Endothelial cell of umbilical vein (primary cell): ENCODE measurements at regions of chr11 and their contacts with region 1.

Region 1: GRCh38 chr11:79100093-79100910 is 340.5 kb downstream of the TENM4 start:
- DNase-seq: peak; percentile 68
- H3K4me3 ChIP-seq: no peak overlapping the region
- H3K27ac ChIP-seq: no peak overlapping the region
- H3K4me1 ChIP-seq: peaks cover 8% of the 10 kb centered on the region
- H3K27me3 ChIP-seq: no peaks in the 10 kb centered on the region
- CTCF ChIP-seq: peak; percentile 78
- POLR2A ChIP-seq: no peak

Region 2: DNA sequence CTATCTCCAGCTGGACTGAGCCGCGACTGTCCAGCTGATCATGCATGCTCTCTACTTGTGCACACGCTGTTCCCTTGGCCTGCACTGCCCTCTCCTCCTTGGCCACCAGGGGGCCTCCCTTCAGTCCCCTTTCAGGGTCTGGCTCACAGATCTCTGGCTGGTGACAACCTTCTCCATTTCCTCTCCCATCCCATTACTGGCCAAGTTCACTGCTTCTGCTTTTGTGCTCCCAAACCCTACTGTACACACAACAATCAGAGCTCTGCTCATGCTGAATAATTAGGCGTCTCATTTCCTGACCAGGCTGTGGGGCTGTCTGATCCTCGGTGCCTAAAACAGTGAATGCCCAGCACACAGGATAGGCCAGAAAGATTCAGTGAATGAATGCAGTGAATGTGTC is 301.6 kb before region 1 on chr11:
- CTCF ChIA-PET with region 1: interaction called, 78 read pairs
- POLR2A ChIA-PET with region 1: no interaction called
- dilution Hi-C with region 1: no loop called
- intact Hi-C with region 1: loop called (anchors 1 kb)
- DNase-seq: peak; percentile 59
- H3K4me3 ChIP-seq: no peak overlapping the region
- H3K27ac ChIP-seq: no peak overlapping the region
- H3K4me1 ChIP-seq: peaks cover 41% of the 10 kb centered on the region
- H3K27me3 ChIP-seq: no peaks in the 10 kb centered on the region
- CTCF ChIP-seq: peak; percentile 85 to 94
- POLR2A ChIP-seq: no peak

Region 3: GRCh38 chr11:79052544-79052943 is 47.8 kb before region 1 on chr11:
- CTCF ChIA-PET with region 1: interaction called, 21 read pairs
- POLR2A ChIA-PET with region 1: no interaction called
- dilution Hi-C with region 1: no loop called
- intact Hi-C with region 1: no loop called
- DNase-seq: peak; percentile 28
- H3K4me3 ChIP-seq: no peak overlapping the region
- H3K27ac ChIP-seq: no peak overlapping the region
- H3K4me1 ChIP-seq: no peaks in the 10 kb centered on the region
- H3K27me3 ChIP-seq: peaks cover 9 to 14% of the 10 kb centered on the region in 2 experiments
- CTCF ChIP-seq: peak in 1 of 2 donors; percentile 66
- POLR2A ChIP-seq: no peak

Region 4: GRCh38 chr11:79071190-79071589 is 29.1 kb before region 1 on chr11:
- CTCF ChIA-PET with region 1: interaction called, 25 read pairs
- POLR2A ChIA-PET with region 1: no interaction called
- dilution Hi-C with region 1: no loop called
- intact Hi-C with region 1: no loop called
- DNase-seq: no peak
- H3K4me3 ChIP-seq: no peak overlapping the region
- H3K27ac ChIP-seq: no peak overlapping the region
- H3K4me1 ChIP-seq: no peaks in the 10 kb centered on the region
- H3K27me3 ChIP-seq: no peaks in the 10 kb centered on the region
- CTCF ChIP-seq: no peak
- POLR2A ChIP-seq: no peak

Region 5: DNA sequence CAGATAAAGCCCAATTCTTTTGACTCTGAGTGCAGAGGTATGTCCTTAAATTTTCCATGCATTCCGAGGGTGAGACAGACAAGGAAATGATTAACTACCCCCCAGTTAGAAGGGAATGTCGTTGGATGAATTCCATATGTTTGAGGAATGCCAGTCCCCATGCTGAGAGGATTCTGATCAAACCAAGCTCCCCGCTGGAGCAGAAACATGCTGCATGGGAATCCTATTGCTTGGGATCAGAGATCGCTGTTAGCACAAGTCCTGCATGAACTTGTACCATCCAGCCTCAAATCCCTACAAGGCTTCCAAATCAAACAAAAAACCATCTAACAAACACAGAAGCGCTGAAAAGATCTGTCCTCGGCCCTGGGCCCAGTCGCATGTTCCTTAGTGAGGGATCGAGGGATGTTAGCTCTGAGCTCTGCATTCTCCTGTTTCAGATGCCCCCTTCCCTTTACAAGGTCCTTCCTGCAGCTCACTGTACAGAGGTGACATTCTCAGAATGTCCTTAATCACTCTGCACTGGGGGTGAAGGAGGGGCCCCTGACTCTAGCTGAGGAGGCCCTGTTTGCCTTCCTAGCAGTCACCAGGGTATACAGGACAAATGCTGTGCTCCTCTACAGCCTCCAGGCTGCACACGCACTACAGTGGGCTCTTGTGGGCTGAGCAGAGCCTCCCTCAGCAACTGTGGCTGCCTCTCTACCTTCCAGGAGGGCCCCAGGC is 12.9 kb before region 1 on chr11:
- CTCF ChIA-PET with region 1: interaction called, 85 read pairs
- POLR2A ChIA-PET with region 1: no interaction called
- dilution Hi-C with region 1: no loop called
- intact Hi-C with region 1: no loop called
- DNase-seq: peak; percentile 76
- H3K4me3 ChIP-seq: no peak overlapping the region
- H3K27ac ChIP-seq: peak overlapping the region; percentile 30
- H3K4me1 ChIP-seq: peaks cover 20% of the 10 kb centered on the region
- H3K27me3 ChIP-seq: no peaks in the 10 kb centered on the region
- CTCF ChIP-seq: no peak
- POLR2A ChIP-seq: no peak